HEK293T (cell line): ENCODE measurements at regions of chr11 and their contacts with region 1.

Region 1: DNA sequence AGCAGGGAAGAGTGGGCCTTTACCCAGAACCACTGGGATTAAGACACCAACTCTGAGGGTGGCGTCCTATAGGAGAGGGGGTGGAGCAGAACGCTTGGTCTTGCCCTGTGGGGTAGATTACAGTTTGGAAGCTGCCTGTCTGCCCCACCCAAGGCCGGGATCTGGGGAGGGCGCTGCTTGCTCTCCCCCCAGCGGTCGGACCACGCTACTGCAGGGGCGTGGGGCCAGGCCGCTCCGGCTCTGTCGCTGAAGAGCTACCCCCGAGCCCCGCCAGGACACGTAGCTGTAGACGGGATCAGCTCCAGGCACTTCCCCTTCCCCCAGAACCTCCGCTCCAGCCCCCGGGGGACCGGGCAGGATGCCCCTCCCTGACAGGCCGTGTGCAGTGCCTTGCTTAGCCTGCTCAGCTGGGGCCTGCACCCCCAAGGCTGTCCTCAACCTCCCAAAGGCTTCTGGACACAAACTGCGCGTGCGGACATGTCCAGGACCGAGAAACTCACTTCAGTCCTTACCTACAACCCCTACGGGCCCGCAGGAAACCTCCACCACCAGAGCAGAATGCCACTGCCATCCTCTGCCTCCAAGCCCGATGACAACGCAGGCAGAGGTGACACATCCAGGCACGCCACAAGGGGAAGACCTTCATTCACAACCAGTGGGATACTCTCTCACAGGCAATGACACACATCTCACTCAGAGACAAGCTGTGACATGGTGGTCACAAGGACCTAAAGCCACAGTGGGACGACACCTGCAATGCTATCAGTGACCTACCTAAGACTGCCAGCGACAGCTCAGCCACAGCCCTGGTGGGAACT is 3.6 kb downstream of the AHNAK start:
- DNase-seq: peak; percentile 85

Region 2: GRCh38 chr11:62394825-62395538 is 148.0 kb before region 1 on chr11:
- CTCF ChIA-PET with region 1: interaction called, 26 read pairs
- POLR2A ChIA-PET with region 1: interaction called, 3 read pairs
- DNase-seq: peak; percentile 74

Region 3: DNA sequence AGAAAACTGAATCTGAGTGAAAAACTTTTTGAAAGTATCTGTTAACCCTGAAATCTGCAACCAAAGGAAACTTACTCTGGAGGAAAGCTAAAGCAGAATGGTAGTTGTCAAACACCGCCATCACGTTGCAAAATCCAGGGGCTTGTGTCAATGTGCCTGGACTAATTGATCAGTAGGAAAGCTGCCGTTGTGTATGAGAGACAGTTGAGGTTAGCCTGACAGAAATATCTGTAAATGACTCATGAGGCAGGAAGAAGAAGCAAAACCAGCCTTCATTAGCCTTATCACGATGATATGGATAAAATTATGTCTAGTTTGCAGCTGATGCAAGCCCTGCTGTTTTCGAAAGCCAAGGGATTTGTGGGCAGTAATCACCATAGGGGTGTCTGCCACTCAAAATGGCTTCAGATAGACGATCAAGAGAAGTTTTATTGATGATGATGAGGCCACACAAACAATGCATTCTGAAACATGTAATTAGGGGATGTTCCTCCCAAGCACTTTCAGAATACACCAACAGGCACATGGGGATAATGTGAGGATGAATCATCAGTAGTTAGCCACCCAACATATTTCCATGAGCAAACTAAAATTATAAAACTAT is 115.2 kb before region 1 on chr11:
- CTCF ChIA-PET with region 1: interaction called, 54 read pairs
- POLR2A ChIA-PET with region 1: interaction called, 5 read pairs
- DNase-seq: no peak

Region 4: GRCh38 chr11:62499944-62500649 is 42.9 kb before region 1 on chr11:
- CTCF ChIA-PET with region 1: interaction called, 10 read pairs
- POLR2A ChIA-PET with region 1: no interaction called
- DNase-seq: no peak

Region 5: GRCh38 chr11:62556108-62556871 is 13.3 kb after region 1 on chr11:
- CTCF ChIA-PET with region 1: interaction called, 13 read pairs
- POLR2A ChIA-PET with region 1: interaction called, 13 read pairs
- DNase-seq: peak; percentile 77

Region 6: GRCh38 chr11:62607714-62608113 is 64.8 kb after region 1 on chr11:
- CTCF ChIA-PET with region 1: no interaction called
- POLR2A ChIA-PET with region 1: no interaction called
- DNase-seq: no peak